Activated CD4-positive, alpha-beta memory T cell treated with anti-CD3 and anti-CD28 coated beads for 36 hours (primary cell): ENCODE measurements at regions of chr9 and their contacts with region 1.

Region 1: DNA sequence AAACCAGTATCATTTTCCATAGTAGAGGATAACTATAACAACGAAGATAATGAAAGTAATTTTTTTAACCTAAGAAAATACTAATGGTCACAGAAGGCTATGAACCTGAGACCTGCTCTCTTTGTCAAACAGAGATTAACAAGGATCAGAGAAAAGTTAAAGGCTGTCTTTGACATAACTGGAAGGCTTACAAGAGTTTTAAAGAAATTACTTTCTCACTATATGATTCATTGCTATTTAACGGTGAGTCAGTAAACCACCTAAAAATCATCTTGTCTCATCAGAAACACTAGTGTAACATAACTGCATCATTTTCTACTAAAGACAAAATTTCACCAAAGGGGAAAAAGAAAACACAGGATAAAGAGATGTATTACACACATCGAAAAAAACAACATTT is 19.3 kb downstream of the MLANA start:
- DNase-seq: no peak
- H3K4me3 Mint-ChIP-seq: no peak overlapping the region
- H3K27ac Mint-ChIP-seq: peak overlapping the region; percentile 86
- H3K4me1 Mint-ChIP-seq: peaks cover 25% of the 10 kb centered on the region
- H3K27me3 Mint-ChIP-seq: no peaks in the 10 kb centered on the region

Region 2: DNA sequence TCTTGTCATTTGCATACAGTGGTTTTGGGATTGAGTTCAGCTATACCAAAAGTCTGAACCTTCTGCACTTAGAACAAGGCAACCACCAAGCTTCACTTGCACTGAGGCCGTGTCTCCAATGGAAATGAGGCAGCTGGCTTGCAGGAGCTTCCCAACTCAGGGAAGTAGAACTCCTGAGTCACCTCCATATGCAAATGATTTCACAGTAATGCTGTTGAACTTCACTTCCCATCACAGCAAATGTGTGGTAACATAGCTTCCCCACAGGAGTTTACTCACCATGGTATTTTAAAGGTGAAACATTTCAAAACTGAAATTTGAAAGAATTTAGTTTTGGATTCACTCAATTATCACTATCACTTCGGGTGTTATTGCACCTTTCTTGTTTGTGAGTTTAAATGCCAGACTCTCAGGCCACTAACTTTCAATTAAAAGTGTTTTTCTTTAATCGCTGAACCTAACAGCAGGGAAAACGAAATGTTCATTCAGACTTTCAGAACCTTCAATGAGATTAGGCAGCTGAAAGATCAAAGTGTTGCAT is 450.6 kb before region 1 on chr9:
- CTCF ChIA-PET with region 1: no interaction called
- POLR2A ChIA-PET with region 1: no interaction called
- intact Hi-C with region 1: loop called (anchors 1 kb)
- DNase-seq: peak; percentile 57
- H3K4me3 Mint-ChIP-seq: peak overlapping the region; percentile 68
- H3K27ac Mint-ChIP-seq: peak overlapping the region; percentile 87
- H3K4me1 Mint-ChIP-seq: peaks cover 73% of the 10 kb centered on the region
- H3K27me3 Mint-ChIP-seq: no peaks in the 10 kb centered on the region

Region 3: GRCh38 chr9:5764130-5764868 is 145.7 kb before region 1 on chr9:
- CTCF ChIA-PET with region 1: no interaction called
- POLR2A ChIA-PET with region 1: no interaction called
- intact Hi-C with region 1: loop called (anchors 1 kb)
- DNase-seq: peak; percentile 24
- H3K4me3 Mint-ChIP-seq: no peak overlapping the region
- H3K27ac Mint-ChIP-seq: peak overlapping the region; percentile 31
- H3K4me1 Mint-ChIP-seq: peaks cover 58% of the 10 kb centered on the region
- H3K27me3 Mint-ChIP-seq: no peaks in the 10 kb centered on the region

Region 4: DNA sequence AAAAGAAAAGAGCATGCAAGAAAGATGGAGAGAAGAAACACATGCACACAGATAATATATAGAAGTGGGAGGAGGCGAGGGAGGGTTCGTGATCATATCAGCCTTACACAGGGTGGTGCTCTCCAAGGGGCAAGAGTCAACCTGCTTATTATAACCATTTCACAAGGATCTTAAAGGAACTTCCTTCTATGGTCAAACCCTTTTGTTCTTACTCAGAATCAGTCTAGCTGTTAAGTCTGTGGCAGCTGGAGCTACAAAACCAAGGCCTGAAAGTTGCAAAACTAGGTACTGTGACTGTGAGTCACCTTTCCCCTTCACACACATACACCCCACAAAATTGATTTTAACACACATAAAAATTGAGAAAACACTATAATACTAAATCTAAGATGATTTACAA is 58.5 kb before region 1 on chr9:
- CTCF ChIA-PET with region 1: no interaction called
- POLR2A ChIA-PET with region 1: no interaction called
- intact Hi-C with region 1: loop called (anchors 2 kb)
- DNase-seq: peak; percentile 66
- H3K4me3 Mint-ChIP-seq: no peak overlapping the region
- H3K27ac Mint-ChIP-seq: peak overlapping the region; percentile 70
- H3K4me1 Mint-ChIP-seq: peaks cover 46% of the 10 kb centered on the region
- H3K27me3 Mint-ChIP-seq: no peaks in the 10 kb centered on the region

Region 5: GRCh38 chr9:5920860-5921328 is 10.9 kb after region 1 on chr9:
- CTCF ChIA-PET with region 1: interaction called, 3 read pairs
- POLR2A ChIA-PET with region 1: no interaction called
- intact Hi-C with region 1: loop called (anchors 1 kb)
- DNase-seq: peak; percentile 54
- H3K4me3 Mint-ChIP-seq: no peak overlapping the region
- H3K27ac Mint-ChIP-seq: peak overlapping the region; percentile 90
- H3K4me1 Mint-ChIP-seq: peaks cover 27% of the 10 kb centered on the region
- H3K27me3 Mint-ChIP-seq: no peaks in the 10 kb centered on the region

Region 6: GRCh38 chr9:5949103-5949699 is 39.2 kb after region 1 on chr9:
- CTCF ChIA-PET with region 1: interaction called, 5 read pairs
- POLR2A ChIA-PET with region 1: no interaction called
- intact Hi-C with region 1: loop called (anchors 5 kb)
- DNase-seq: peak; percentile 35
- H3K4me3 Mint-ChIP-seq: no peak overlapping the region
- H3K27ac Mint-ChIP-seq: no peak overlapping the region
- H3K4me1 Mint-ChIP-seq: peaks cover 27% of the 10 kb centered on the region
- H3K27me3 Mint-ChIP-seq: no peaks in the 10 kb centered on the region

Region 7: GRCh38 chr9:6015278-6016157 is 105.5 kb after region 1 on chr9 and contains the start of gene RANBP6:
- CTCF ChIA-PET with region 1: no interaction called
- POLR2A ChIA-PET with region 1: no interaction called
- intact Hi-C with region 1: loop called (anchors 1 kb)
- DNase-seq: peak; percentile 96
- H3K4me3 Mint-ChIP-seq: peak within 1 kb of the TSS; percentile 96
- H3K27ac Mint-ChIP-seq: peak within 1 kb of the TSS; percentile 98
- H3K4me1 Mint-ChIP-seq: peaks cover 46% of the 10 kb centered on the region
- H3K27me3 Mint-ChIP-seq: no peaks in the 10 kb centered on the region
- total RNA-seq, gene RANBP6: 20.0 to 20.7 TPM